GM10248 (cell line): ENCODE measurements at regions of chr3 and their contacts with region 1.

Region 1: DNA sequence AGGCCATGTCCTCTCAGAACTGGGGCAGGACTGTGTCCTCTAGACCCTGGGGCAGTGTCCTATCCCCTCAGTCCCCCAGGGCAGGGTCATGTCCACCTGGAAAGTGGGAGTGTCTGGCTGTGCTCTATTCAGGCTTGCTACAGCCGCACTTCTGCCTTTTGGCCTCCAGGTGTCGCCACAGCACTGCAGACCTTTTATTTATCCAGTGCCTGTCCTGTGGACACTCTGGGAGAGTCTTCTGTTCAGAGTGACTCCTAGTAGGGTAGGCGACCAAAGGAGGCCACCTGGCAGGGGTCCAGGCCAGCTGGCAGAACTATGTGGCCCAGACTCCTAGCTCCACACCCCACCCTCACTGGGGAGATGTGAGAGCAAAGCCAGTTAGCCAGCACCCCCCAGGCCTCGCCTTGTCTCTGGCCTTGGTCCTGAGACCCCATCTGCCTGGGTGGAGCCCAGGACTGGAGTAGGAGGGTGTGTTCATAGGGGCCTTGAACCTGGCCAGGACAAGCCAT is 3.9 kb downstream of the TMIE start:
- DNase-seq: peak; percentile 85
- CTCF ChIP-seq: peak; percentile 98

Region 2: DNA sequence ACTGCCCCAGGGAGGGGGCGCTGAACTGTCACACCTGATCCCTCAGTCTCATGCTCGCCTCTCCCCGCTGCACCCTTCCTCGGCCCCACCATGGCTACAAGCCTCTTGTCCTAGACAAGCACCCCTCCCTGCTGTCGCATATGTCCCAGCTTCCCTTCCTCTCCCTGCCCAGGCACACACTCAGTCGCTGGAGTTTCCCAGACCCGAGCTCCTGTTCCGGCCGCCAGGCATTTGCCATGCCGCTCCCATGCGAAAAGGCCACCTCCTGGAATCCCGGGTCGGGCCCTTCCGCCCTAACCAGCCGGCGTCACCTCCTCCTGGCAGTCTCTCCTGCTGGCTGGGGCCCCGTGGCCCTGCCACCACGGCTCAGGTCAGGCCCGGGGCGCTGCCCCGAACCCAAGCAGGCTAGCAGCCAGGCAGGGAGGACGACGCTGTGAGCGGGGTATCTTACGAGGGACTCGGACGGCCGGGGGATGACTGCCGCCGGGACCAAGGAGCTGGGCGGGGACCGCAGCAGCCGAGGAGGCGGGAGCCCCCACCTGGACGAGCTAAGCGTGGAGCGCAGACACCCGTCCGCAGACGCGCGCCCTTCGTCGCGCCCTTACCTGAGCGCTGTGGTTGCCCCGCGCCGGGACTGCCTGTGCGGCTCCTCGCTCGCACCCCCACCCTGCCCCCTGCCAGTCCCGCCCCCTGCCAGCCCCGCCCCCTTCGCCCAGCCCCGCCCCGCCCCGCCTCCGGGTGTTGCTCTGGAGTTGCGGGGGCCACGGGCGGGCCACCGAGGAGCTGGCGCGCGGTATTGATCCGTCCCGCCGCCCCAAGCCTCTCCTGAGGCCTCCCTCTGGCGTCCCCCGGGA is 11.8 kb before region 1 on chr3 and contains the start of gene ALS2CL:
- CTCF ChIA-PET with region 1: interaction called, 10 read pairs
- POLR2A ChIA-PET with region 1: no interaction called
- DNase-seq: peak; percentile 74
- CTCF ChIP-seq: no peak

Region 3: GRCh38 chr3:46719735-46720271 is 14.7 kb after region 1 on chr3:
- CTCF ChIA-PET with region 1: interaction called, 12 read pairs
- POLR2A ChIA-PET with region 1: no interaction called
- DNase-seq: no peak
- CTCF ChIP-seq: no peak